ENCODE measurements at regions of chr7 and their contacts with region 1.

Region 1: GRCh38 chr7:127850195-127850594 is 181.0 kb downstream of the LRRC4 start:
- DNase-seq: no peak
- H3K4me3 Mint-ChIP-seq: peak overlapping the region; percentile 6
- H3K27ac Mint-ChIP-seq: peak overlapping the region; percentile 64
- H3K4me1 Mint-ChIP-seq: peaks cover 37% of the 10 kb centered on the region
- H3K27me3 Mint-ChIP-seq: no peaks in the 10 kb centered on the region

Region 2: DNA sequence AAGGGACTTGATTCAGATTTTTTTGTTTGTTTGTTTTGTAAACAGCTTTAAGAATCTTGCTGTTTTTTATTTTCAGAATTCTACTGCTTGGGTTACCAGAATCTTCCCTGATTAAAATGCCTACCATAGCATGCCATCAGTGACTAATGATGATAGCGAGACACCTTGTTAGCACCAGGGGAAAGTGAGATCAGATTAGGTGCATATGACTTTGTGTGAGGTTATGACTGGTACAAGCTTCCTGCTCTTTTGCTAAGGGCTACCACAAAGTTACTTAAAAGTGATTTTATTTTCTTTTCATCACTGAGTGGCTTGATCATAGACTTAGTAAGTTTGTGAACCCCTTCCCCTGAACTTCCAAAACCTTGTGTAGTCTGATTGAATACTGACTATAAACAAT is 104.8 kb before region 1 on chr7:
- intact Hi-C with region 1: loop called (anchors 1 kb)
- DNase-seq: no peak
- H3K4me3 Mint-ChIP-seq: no peak overlapping the region
- H3K27ac Mint-ChIP-seq: peak overlapping the region; percentile 38
- H3K4me1 Mint-ChIP-seq: peaks cover 29% of the 10 kb centered on the region
- H3K27me3 Mint-ChIP-seq: no peaks in the 10 kb centered on the region

Region 3: GRCh38 chr7:127874951-127875608 is 24.9 kb after region 1 on chr7:
- intact Hi-C with region 1: loop called (anchors 1 kb)
- DNase-seq: no peak
- H3K4me3 Mint-ChIP-seq: no peak overlapping the region
- H3K27ac Mint-ChIP-seq: no peak overlapping the region
- H3K4me1 Mint-ChIP-seq: peaks cover 23% of the 10 kb centered on the region
- H3K27me3 Mint-ChIP-seq: no peaks in the 10 kb centered on the region

Region 4: GRCh38 chr7:127897704-127898454 is 47.7 kb after region 1 on chr7:
- intact Hi-C with region 1: loop called (anchors 1 kb)
- DNase-seq: no peak
- H3K4me3 Mint-ChIP-seq: no peak overlapping the region
- H3K27ac Mint-ChIP-seq: no peak overlapping the region
- H3K4me1 Mint-ChIP-seq: peaks cover 20% of the 10 kb centered on the region
- H3K27me3 Mint-ChIP-seq: no peaks in the 10 kb centered on the region

Region 5: GRCh38 chr7:128112781-128113221 is 262.6 kb after region 1 on chr7:
- intact Hi-C with region 1: loop called (anchors 5 kb)
- DNase-seq: no peak
- H3K4me3 Mint-ChIP-seq: no peak overlapping the region
- H3K27ac Mint-ChIP-seq: no peak overlapping the region
- H3K4me1 Mint-ChIP-seq: peaks cover 26% of the 10 kb centered on the region
- H3K27me3 Mint-ChIP-seq: peaks cover 10% of the 10 kb centered on the region